MCF 10A (cell line): ENCODE measurements at regions of chr1 and their contacts with region 1.

Region 1: GRCh38 chr1:9910425-9911178 is 533 bp upstream of the CTNNBIP1 start:
- DNase-seq: peak; percentile 99
- H3K4me3 Mint-ChIP-seq: peak overlapping the region; percentile 93
- H3K27ac Mint-ChIP-seq: peak overlapping the region; percentile 99
- H3K4me1 Mint-ChIP-seq: peaks cover 30% of the 10 kb centered on the region
- H3K27me3 Mint-ChIP-seq: no peaks in the 10 kb centered on the region
- CTCF ChIP-seq: no peak

Region 2: GRCh38 chr1:9539165-9539828 is 371.3 kb before region 1 on chr1 and contains the start of gene SLC25A33:
- CTCF ChIA-PET with region 1: no interaction called
- POLR2A ChIA-PET with region 1: no interaction called
- intact Hi-C with region 1: no loop called
- DNase-seq: peak; percentile 97
- H3K4me3 Mint-ChIP-seq: peak within 1 kb of the TSS; percentile 71
- H3K27ac Mint-ChIP-seq: peak within 1 kb of the TSS; percentile 57
- H3K4me1 Mint-ChIP-seq: peaks cover 5% of the 10 kb centered on the region
- H3K27me3 Mint-ChIP-seq: no peaks in the 10 kb centered on the region
- CTCF ChIP-seq: no peak
- total RNA-seq, gene SLC25A33: 6.5 and 8.1 TPM in 2 replicates

Region 3: DNA sequence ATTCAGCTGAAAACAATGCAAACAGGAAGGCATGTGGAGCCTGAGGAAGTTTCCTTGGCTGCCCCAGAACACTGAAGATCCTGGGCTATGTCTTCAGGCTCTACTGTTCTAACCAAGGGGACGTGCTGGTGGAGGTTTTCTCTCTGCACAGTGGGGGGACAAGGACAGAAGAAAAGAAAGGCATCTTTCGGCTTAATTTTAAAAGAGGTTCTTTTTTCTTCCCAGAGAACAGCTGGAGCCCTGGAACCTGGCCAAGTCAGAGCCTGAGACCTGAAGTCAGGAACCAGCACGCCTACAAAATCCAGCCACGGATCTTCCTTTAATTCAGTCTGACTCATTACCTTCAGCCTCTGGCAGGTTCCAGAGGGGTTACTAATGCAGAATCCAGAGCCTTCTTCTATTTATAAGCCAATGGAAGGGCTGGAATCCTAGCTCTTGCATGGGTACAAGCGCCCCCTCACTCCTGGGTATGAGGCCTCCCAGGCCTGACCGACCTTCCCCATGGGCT is 20.3 kb before region 1 on chr1:
- CTCF ChIA-PET with region 1: interaction called, 5 read pairs
- POLR2A ChIA-PET with region 1: interaction called, 77 read pairs
- intact Hi-C with region 1: no loop called
- DNase-seq: peak; percentile 96
- H3K4me3 Mint-ChIP-seq: peak overlapping the region; percentile 59
- H3K27ac Mint-ChIP-seq: peak overlapping the region; percentile 81
- H3K4me1 Mint-ChIP-seq: peaks cover 42% of the 10 kb centered on the region
- H3K27me3 Mint-ChIP-seq: no peaks in the 10 kb centered on the region
- CTCF ChIP-seq: no peak

Region 4: DNA sequence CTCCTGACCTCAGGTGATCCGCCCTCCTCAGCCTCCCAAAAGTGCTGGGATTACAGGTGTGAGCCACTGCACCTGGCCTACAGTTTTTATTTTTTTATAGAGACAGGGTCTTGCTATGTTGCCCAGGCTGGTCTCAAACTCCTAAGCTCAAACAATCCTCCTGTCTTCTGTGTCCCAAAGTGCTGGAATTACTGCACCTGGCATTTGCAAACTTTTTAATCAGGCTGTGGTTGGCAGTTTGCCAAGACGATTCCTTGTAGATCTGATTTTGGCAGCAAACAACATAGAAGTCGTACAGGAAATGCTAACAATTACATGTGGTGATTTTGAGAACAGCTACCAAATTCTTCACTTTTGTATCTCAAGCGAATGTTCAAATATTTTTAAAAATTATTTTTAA is 96.6 kb after region 1 on chr1:
- CTCF ChIA-PET with region 1: no interaction called
- POLR2A ChIA-PET with region 1: no interaction called
- intact Hi-C with region 1: no loop called
- DNase-seq: peak; percentile 22
- H3K4me3 Mint-ChIP-seq: no peak overlapping the region
- H3K27ac Mint-ChIP-seq: no peak overlapping the region
- H3K4me1 Mint-ChIP-seq: no peaks in the 10 kb centered on the region
- H3K27me3 Mint-ChIP-seq: no peaks in the 10 kb centered on the region
- CTCF ChIP-seq: no peak